A673 (cell line): ENCODE measurements at regions of chr17 and their contacts with region 1.

Region 1: GRCh38 chr17:1755252-1755826 is 6.5 kb upstream of the SERPINF1 start:
- DNase-seq: no peak
- H3K4me3 ChIP-seq: no peak overlapping the region
- H3K27ac ChIP-seq: no peak overlapping the region
- H3K4me1 ChIP-seq: no peaks in the 10 kb centered on the region
- H3K27me3 ChIP-seq: no peaks in the 10 kb centered on the region
- CTCF ChIP-seq: no peak

Region 2: GRCh38 chr17:1147661-1148060 is 607.7 kb before region 1 on chr17:
- CTCF ChIA-PET with region 1: no interaction called
- POLR2A ChIA-PET with region 1: no interaction called
- intact Hi-C with region 1: no loop called
- DNase-seq: peak; percentile 82
- H3K4me3 ChIP-seq: no peak overlapping the region
- H3K27ac ChIP-seq: no peak overlapping the region
- H3K4me1 ChIP-seq: peaks cover 7% of the 10 kb centered on the region
- H3K27me3 ChIP-seq: no peaks in the 10 kb centered on the region
- CTCF ChIP-seq: peak; percentile 72

Region 3: DNA sequence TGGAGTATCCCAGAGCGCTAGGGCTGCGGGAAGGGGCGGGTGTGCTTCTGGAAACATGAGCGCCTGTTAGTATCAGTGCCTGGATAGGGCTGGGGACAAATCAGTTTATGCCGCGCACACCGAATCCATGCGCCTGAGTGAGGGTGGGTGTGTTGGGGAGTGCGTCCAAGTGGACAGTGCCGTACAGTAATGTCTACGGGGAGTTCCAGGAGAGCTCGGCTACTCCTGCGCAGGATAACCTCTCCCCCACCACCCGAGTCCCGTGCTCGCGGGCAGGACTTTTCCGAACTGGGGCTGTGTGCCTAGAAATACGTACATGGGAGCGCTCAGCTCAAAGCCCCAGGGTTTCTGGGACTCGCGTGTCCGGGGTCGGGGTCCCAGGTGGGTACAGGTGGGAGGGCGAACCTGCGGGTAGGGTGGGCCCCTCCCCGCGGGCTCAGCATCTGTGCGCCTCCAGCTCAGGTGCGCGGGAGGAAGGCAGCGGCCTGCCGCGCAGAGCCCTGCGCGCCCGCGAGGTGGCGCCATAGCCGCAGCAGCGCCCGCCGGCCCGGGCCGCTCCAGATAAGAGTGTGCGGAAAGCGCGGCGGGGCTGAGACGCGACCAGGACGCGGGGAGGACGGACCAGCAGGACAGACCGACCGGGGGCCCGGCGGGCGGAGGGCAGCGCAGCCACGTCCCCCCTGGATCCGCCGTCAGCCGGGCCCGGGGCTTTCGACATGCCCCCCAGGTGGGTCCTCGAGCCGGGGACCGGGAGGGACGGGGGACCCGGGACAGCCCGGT is 299.4 kb after region 1 on chr17 and contains the start of gene HIC1:
- CTCF ChIA-PET with region 1: no interaction called
- POLR2A ChIA-PET with region 1: no interaction called
- intact Hi-C with region 1: no loop called
- DNase-seq: peak; percentile 81
- H3K4me3 ChIP-seq: peak within 1 kb of the TSS; percentile 58
- H3K27ac ChIP-seq: no peak within 1 kb of the TSS
- H3K4me1 ChIP-seq: peaks cover 17% of the 10 kb centered on the region
- H3K27me3 ChIP-seq: no peaks in the 10 kb centered on the region
- CTCF ChIP-seq: peak; percentile 69
- total RNA-seq, gene HIC1: 0.84 and 1.5 TPM in 2 replicates

Region 4: DNA sequence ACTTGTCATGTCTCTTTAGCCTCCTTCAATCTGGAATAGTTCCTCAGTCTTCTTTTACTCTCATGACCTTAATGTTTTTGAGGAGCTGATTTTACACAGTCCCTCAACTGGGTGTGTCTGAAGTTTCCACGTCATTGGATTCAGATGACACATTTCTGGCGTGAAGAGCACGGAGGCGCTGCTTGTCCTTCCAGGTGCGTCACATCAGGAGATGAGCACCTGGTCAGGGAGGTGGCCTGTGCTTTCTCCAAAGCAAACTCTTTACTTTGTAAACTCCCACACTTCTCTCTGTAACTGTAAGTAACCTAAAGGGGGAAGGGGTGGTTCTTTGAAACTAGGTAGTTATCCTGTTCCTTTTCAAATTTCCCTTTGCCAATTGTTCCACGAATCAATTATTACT is 698.0 kb after region 1 on chr17:
- CTCF ChIA-PET with region 1: no interaction called
- POLR2A ChIA-PET with region 1: interaction called, 12 read pairs
- intact Hi-C with region 1: no loop called
- DNase-seq: no peak
- H3K4me3 ChIP-seq: no peak overlapping the region
- H3K27ac ChIP-seq: no peak overlapping the region
- H3K4me1 ChIP-seq: peaks cover 22% of the 10 kb centered on the region
- H3K27me3 ChIP-seq: no peaks in the 10 kb centered on the region
- CTCF ChIP-seq: no peak